Posterior vena cava (tissue), 2 donors: ENCODE measurements at regions of chr2 and their contacts with region 1.

Region 1: DNA sequence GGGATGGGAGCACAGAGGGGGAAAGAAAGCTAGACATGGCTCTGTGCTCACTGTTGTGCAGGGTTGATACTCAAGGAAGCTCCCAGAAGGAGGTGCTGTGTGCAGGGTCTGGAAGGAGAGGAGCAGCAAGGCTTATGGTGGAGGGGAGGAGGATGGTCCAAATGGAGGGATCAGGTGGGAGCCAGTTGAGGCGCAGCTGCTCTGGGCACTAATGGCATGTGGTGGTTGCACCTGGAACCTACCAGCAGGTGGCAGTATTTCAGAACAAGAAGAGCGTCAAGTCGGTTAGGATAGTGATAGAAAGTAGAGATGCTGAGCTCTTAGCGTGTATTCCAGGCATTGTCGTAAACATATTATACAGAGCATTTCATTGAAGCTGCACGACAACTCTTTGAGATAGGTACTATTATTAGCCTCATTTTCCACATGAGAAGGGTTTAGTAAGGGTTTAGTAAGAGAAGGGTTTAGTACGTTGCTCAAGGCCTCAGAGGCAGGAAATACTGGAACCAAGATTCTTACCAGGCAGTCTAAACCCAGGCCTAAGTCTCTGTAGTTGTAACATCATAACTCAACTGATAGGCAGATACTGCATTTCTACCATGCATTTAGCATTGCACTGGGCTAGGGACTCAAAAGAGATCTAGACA is 223.7 kb downstream of the CYP26B1 start:
- DNase-seq: peak; percentile 82

Region 2: GRCh38 chr2:72142570-72143440 is 218.8 kb after region 1 on chr2:
- intact Hi-C with region 1: loop called (anchors 2 to 5 kb)
- DNase-seq: peak; percentile 91